ENCODE measurements at regions of chr3 and their contacts with region 1.

Region 1: DNA sequence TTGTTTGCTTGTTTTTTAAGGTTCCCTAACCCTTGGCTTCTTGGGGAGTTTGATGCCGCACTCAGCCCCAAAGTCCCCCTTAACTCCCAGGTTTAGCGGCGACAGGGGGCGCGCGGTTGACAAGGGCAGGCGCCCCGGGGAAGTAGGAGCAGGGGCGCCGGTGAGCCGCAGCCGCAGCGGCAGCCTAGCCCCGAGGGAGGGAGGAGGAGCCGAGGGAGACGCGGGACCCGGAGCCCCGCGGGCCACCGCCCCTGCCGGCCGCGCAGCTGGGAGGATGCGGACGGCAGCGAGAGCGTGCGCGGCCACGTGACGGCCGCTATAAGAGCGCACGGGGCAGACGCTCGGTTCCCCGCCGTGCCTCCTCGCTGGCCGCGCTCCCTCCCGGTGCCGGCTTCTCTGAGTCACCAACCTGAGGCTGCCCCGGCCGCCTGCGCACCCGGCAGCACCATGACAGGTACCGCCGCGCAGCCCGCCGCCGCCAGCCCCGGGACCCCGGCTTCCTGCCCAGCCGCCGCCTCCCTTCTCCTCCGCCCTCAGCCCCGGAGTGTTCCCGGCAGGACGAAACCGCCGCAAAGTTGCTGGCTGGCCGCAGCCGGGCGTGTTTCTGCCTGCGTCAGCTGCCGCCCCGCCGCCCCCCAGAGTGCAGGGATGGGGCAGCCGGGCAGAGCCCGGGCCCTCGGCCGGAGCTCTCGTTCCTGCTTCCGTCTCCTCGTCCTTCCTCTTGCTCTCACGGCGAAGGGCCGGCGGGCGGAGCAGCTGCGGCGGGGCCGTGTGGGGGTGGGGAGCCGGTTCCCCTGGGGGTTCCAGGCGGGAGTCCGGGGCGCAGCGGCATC is at the start of gene GYG1:
- DNase-seq: peak; percentile 85 to 90 (median 88)
- ATAC-seq: peak; percentile 95
- H3K4me3 ChIP-seq: peak within 1 kb of the TSS; percentile 86
- H3K27ac ChIP-seq: peak within 1 kb of the TSS; percentile 67
- H3K4me1 ChIP-seq: peaks cover 6 to 13% of the 10 kb centered on the region in 2 experiments; a peak in 4 of 5 replicates
- H3K27me3 ChIP-seq: peaks cover 4 to 8% of the 10 kb centered on the region in 2 experiments; a peak in 3 of 5 replicates
- CTCF ChIP-seq: peak; percentile 49 to 85 (median 65)
- EP300 ChIP-seq: no peak
- POLR2A ChIP-seq: peak; percentile 80
- RAD21 ChIP-seq: no peak
- polyA plus RNA-seq, gene GYG1: 27.7 to 38.4 TPM

Region 2: DNA sequence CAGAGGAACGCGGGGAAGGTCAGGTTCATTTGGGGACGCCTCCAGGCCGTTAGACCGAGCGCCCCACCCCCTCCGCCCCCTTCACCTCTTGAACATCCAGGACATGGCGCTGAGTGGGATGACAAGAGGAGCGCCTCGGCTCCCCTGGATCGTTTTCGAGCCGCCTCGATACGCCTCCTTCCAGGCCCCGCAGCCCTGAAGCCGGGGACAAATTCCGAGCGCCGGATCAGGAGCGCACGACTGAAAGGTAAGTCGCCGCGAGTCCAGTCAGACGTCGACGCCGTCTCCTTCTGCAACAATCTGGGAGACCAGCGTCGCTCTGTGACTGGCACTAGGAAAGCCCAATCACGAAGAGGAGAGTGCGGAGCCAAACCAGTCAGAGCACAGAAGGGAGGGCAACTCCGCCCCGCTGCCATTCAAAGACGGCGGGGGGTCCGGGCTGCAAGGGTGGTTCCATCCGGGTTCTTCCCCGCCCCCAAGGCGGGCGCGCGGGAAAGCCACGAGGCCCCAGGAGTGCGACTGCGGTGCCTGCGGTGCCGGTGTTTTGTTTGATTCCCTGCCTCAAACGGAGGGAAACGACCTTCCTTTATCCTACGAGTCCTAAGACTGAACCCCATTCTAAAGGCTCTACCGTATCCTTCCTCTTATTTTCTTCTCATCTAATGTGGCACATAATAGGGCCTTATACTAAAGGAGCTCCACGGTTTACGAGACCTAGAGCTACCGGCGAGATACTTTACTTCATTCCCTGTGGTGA is 95.0 kb after region 1 on chr3 and contains the start of gene HLTF:
- CTCF ChIA-PET with region 1: no interaction called
- POLR2A ChIA-PET with region 1: interaction called, 4 read pairs
- in situ Hi-C with region 1: no loop called
- intact Hi-C with region 1: loop called (anchors 5 kb)
- DNase-seq: peak; percentile 97 to 98 (median 97)
- ATAC-seq: peak; percentile 98
- H3K4me3 ChIP-seq: peak within 1 kb of the TSS; percentile 62
- H3K27ac ChIP-seq: peak within 1 kb of the TSS; percentile 87
- H3K4me1 ChIP-seq: peaks cover 11 to 18% of the 10 kb centered on the region in 2 experiments; a peak in 4 of 5 replicates
- H3K27me3 ChIP-seq: no peaks in the 10 kb centered on the region
- CTCF ChIP-seq: no peak
- EP300 ChIP-seq: peak; percentile 45; the same call in 1 of the 2 replicates
- POLR2A ChIP-seq: peak; percentile 86
- RAD21 ChIP-seq: no peak
- polyA plus RNA-seq, gene HLTF: 35.1 to 37.3 TPM

Region 3: DNA sequence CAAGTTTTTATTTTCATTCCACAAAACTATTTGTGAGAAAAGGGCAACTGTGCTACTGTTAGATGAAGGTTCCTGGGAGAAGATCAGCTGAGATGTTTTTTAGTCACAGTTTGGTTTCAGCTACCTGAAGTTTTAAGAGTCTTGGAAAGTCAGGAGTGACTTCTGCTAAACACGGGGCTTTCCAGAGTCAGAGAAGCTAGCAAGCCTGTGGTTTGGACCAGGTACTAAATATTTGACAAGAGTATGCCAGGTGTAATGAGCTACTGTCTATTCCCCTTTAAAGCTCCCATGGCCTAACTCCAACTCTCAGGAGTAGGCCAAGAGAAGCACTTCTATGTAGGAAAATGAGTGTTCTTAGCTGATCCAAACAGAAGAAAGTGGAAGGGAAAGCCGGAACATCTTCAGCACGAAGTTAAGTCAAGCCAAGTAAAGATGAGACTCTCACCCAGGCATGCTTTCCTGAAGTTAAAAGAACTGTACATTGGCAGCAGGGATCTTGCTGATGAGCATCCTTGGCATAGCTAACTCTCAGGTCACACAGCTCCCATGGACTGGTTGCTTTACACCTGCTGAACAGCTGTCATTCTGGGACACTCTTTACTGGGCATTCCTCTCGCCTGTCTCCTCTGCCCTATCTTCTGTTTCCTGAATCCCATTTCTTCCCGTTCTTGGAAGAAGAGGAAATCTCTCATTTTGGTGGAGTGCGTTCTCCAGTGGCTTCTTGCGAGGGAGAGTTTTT is 319.6 kb after region 1 on chr3:
- CTCF ChIA-PET with region 1: no interaction called
- POLR2A ChIA-PET with region 1: no interaction called
- in situ Hi-C with region 1: no loop called
- intact Hi-C with region 1: no loop called
- DNase-seq: no peak
- ATAC-seq: no peak
- H3K4me3 ChIP-seq: no peak overlapping the region
- H3K27ac ChIP-seq: no peak overlapping the region
- H3K4me1 ChIP-seq: no peaks in the 10 kb centered on the region
- H3K27me3 ChIP-seq: no peaks in the 10 kb centered on the region
- CTCF ChIP-seq: no peak
- EP300 ChIP-seq: no peak
- POLR2A ChIP-seq: no peak
- RAD21 ChIP-seq: no peak

Measured in K562 (cell line).